Dendritic cell treated with granulocyte-macrophage colony-stimulating factor and Interleukin-4, amounts not matched to agents 40 ng/mL and 50 ng/mL, for 4 days (primary cell): ENCODE measurements at regions of chr6 and their contacts with region 1.

Region 1: DNA sequence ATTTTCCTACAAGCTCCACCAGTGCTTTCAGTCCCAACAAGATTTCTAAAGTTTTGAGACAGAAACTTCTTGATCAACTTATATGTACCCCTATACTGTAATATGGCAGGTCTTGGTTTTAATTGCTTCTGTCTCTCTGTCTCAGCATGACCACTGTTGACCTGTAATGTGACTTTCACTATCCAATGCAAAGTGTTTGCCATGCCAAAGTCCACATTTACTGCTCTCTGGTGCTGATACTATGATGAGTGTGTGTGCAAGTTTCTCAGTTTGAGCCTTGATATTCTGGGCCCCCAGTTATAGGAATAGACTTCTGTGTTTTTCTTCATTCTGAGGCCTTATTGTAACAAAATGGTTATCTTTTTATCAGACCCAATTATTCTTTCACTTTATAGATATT is 45.8 kb downstream of the OR2J2 start:
- H3K4me3 Mint-ChIP-seq: no peak overlapping the region
- H3K27ac Mint-ChIP-seq: no peak overlapping the region
- H3K4me1 Mint-ChIP-seq: no peaks in the 10 kb centered on the region
- H3K27me3 Mint-ChIP-seq: peaks cover 1% of the 10 kb centered on the region

Region 2: DNA sequence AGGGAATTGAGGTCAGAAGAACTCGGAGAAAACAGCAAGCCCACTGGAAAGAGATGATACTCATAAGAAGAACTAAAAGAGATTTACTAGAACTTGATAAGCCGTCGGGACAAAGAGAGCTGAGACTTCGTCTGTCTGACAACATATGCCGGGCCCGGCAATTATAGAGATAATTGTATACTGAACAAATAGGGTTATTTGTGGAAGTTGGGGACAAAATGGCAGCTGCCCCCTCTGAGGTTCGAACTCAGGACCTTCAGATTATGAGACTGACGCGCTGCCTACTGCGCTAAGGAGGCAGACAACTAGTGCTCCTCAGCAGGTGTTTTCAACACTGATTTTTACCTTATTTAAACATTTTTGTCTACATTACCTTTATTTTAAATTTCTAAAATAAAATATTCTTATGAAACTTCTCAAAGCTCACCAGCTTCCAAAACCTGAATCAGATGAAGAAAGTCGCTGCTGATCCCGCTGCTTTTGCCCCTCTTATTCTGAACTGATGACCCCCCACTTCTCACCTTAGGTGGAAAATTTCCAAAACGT is 263.4 kb before region 1 on chr6:
- intact Hi-C with region 1: loop called (anchors 10 kb)
- H3K4me3 Mint-ChIP-seq: peak overlapping the region; percentile 1
- H3K27ac Mint-ChIP-seq: no peak overlapping the region
- H3K4me1 Mint-ChIP-seq: peaks cover 9% of the 10 kb centered on the region
- H3K27me3 Mint-ChIP-seq: peaks cover 48% of the 10 kb centered on the region

Region 3: DNA sequence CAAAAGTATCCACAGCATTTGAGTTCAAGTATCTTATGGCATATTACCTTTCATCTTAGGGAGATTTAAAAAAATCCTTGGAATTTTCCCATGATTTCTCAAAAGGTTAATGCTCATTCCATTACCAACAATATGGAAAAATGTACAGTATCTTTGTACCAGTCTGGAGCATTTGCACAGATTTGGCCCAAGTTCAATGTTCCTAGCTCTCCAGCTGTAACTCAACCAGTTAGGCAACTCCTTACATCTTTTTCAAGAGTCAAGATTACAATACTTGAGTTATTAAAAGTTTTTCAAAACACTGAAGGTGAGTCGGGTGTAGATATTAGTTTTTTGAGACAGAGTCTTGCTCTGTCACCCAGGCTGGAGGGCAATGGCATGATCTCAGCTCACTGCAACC is 44.8 kb before region 1 on chr6:
- intact Hi-C with region 1: no loop called
- H3K4me3 Mint-ChIP-seq: no peak overlapping the region
- H3K27ac Mint-ChIP-seq: no peak overlapping the region
- H3K4me1 Mint-ChIP-seq: no peaks in the 10 kb centered on the region
- H3K27me3 Mint-ChIP-seq: no peaks in the 10 kb centered on the region